ENCODE measurements at regions of chr3 and their contacts with region 1.

Region 1: DNA sequence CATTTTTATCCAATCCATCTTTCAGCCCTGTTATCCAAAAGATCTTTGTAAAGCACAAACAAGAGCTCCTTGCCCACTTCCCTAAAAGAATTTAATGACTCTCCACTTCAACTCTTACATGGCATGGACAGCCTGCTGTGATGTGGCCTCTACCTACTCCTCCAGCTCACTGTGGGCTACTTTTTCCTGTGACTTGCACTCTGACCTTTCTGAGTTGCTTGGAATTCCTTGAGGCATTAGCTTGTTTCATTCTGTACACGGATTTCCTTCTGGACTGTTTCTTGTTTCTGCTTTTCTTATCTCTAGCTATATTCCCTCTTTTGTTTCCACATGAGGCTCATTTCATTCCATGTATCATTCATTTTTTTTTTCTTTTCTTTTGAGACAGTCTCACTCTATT is 15.2 kb downstream of the QTRT2 start:
- DNase-seq: no peak
- ATAC-seq: no peak
- H3K4me3 ChIP-seq: no peak overlapping the region
- H3K4me3 Mint-ChIP-seq: peak overlapping the region in 1 of 3 donors; percentile 2
- H3K27ac ChIP-seq: no peak overlapping the region
- H3K27ac Mint-ChIP-seq: no peak overlapping the region
- H3K4me1 ChIP-seq: no peaks in the 10 kb centered on the region
- H3K4me1 Mint-ChIP-seq: peaks cover 0 to 14% (median 2%) of the 10 kb centered on the region in 3 donors
- H3K27me3 ChIP-seq: no peaks in the 10 kb centered on the region
- H3K27me3 Mint-ChIP-seq: no peaks in the 10 kb centered on the region

Region 2: DNA sequence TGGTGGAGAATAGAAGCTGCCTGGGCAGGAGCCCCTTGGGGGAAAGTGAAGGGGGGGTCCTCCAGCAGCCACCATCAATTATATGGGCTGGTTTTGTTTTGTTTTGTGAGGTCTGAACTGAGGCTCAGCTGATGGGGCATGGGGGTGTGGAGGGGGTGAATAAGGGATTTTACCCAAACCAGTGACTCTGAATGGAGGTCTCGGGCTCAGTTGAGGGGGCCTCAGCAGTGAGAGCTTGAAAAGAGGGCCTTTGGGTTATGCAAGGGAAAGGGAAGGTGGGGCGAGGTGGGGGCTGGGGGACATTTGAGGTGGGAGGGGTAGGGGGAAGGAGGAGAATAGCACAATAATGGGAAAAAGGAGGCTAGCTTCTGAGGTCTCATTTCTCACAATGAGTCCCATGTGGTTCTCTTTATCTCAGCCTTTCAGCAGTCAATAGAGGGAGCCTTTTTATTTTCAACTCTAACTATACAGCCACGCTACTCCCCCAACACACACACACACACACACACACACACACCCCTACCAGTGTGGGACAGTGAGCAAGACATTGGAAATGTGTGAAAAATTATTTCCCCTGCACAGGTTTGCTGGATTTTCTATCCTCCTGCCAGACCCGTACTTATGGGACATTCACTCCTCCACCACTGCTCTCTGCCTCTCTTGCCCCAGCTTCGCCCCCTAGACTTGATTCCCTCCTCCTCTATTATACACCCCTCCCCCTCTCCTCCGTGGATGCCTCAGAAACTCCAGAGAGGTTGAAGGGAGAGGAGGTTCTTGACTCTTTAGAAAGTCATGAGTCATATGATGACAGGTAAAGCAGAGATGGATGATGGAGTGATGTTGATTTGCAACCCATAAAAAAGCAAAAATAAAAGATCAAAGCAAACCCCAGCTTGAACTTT is 985.0 kb before region 1 on chr3:
- CTCF ChIA-PET with region 1: no interaction called
- POLR2A ChIA-PET with region 1: interaction called in 1 of 2 experiments, 13 read pairs
- DNase-seq: no peak
- ATAC-seq: no peak
- H3K4me3 ChIP-seq: no peak overlapping the region
- H3K4me3 Mint-ChIP-seq: no peak overlapping the region
- H3K27ac ChIP-seq: no peak overlapping the region
- H3K27ac Mint-ChIP-seq: no peak overlapping the region
- H3K4me1 ChIP-seq: no peaks in the 10 kb centered on the region
- H3K4me1 Mint-ChIP-seq: no peaks in the 10 kb centered on the region
- H3K27me3 ChIP-seq: no peaks in the 10 kb centered on the region
- H3K27me3 Mint-ChIP-seq: no peaks in the 10 kb centered on the region

Region 3: DNA sequence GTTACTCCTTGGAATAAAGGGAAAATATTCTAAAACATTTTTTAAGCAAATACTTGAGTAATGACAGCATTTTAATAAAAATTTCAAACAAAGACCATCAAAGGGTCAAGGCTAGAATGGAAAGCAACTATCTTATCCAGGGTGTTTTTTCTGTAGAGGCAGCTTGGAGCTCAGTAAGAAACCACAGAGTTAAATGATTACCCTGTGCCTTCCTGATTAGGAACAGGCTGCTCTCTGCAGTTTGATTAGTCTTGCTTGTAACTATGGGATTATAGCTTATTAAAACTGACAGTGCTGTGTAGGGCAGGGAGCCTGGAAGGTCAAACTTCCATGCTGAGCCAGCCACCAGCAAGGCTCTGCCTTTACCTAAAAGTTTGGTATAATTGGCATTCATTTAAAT is 17.9 kb after region 1 on chr3:
- CTCF ChIA-PET with region 1: no interaction called
- POLR2A ChIA-PET with region 1: no interaction called
- DNase-seq: no peak
- ATAC-seq: no peak
- H3K4me3 ChIP-seq: no peak overlapping the region
- H3K4me3 Mint-ChIP-seq: no peak overlapping the region
- H3K27ac ChIP-seq: no peak overlapping the region
- H3K27ac Mint-ChIP-seq: no peak overlapping the region
- H3K4me1 ChIP-seq: no peaks in the 10 kb centered on the region
- H3K4me1 Mint-ChIP-seq: peaks cover 2 to 7% (median 3%) of the 10 kb centered on the region in 3 donors
- H3K27me3 ChIP-seq: peaks cover 0 to 1% of the 10 kb centered on the region in 2 experiments
- H3K27me3 Mint-ChIP-seq: no peaks in the 10 kb centered on the region